ENCODE measurements at regions of chr17 and their contacts with region 1.

Region 1: DNA sequence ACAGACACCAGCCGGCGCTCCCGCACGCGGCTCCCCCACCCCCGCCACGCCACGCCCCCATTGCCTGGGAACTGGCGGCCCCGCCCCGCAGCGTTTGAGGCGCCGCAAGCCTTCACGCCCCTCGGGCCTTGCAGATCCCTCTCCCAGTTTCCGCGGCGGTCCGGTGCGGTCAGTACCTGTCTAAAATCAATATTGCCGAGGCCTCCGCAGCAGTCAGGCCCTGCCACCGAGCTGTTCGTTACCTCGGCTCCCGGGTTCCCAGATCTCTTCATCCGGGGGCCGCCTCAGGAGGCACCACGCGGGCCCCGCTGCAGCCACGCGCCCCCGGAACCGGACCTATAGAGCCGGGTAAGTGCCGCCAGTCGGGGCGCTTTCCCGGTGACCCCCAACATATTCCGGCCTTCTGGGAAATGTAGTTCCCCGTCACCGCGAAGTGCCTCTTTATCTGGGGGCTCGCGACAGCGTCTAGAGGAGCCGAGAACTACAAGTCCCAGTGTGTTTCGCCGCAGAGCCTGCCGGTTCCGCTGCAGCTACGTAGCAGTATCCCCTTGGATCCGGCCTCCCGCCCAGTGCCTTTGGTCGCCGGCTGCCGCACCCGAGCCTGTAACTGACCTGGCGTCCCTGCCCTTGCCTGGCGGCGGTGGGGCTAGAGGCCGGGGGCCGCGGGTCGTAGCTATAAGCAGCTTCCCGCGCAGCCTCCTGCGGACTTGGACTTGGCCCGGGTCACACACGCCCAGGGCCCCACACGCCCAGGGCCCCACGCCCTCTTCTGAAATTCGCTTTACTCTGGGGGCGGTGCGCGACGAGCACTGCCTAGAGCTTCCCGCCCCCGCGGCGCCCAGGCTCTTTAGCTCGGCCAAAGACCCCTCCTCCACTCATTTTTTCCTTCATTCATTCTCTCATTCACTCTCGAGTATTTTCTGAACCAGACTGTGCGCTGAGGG is at the start of gene PEMT:
- DNase-seq: peak; percentile 97
- H3K4me3 Mint-ChIP-seq: peak within 1 kb of the TSS; percentile 93
- H3K27ac Mint-ChIP-seq: peak within 1 kb of the TSS; percentile 88
- H3K4me1 Mint-ChIP-seq: peaks cover 20% of the 10 kb centered on the region
- H3K27me3 Mint-ChIP-seq: no peaks in the 10 kb centered on the region
- total RNA-seq, gene PEMT: 33.7 to 35.6 TPM

Region 2: DNA sequence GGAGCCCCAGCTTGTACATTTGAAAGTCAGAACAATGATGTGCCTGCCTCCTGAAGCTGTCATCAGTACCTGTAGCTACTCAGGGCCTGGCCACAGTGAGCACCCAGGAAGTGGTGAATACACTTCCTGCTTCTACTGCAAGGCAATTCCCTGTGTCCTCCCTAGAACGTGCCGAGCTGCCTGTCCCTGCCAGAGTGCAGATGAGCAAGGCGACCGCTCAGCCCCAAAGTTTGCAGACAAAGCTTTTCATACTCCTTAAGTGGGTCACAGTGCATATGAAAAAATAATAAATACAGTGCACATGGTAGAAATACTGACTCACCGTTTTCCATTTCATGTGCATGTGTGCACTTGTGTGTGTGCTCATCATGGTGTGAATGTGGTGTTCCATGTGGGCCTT is 472.1 kb before region 1 on chr17:
- CTCF ChIA-PET with region 1: no interaction called
- intact Hi-C with region 1: loop called (anchors 2 kb)
- DNase-seq: peak; percentile 79
- H3K4me3 Mint-ChIP-seq: no peak overlapping the region
- H3K27ac Mint-ChIP-seq: peak overlapping the region; percentile 82
- H3K4me1 Mint-ChIP-seq: peaks cover 75% of the 10 kb centered on the region
- H3K27me3 Mint-ChIP-seq: no peaks in the 10 kb centered on the region

Region 3: GRCh38 chr17:17496189-17497064 is 95.2 kb before region 1 on chr17 and contains the start of gene RASD1:
- CTCF ChIA-PET with region 1: interaction called, 12 read pairs
- intact Hi-C with region 1: loop called (anchors 2 kb)
- DNase-seq: peak; percentile 81
- H3K4me3 Mint-ChIP-seq: peak within 1 kb of the TSS; percentile 64
- H3K27ac Mint-ChIP-seq: no peak within 1 kb of the TSS
- H3K4me1 Mint-ChIP-seq: peaks cover 12% of the 10 kb centered on the region
- H3K27me3 Mint-ChIP-seq: peaks cover 12% of the 10 kb centered on the region
- total RNA-seq, gene RASD1: 0.17 to 0.36 TPM

Region 4: GRCh38 chr17:17928398-17929287 is 337.0 kb after region 1 on chr17:
- CTCF ChIA-PET with region 1: no interaction called
- intact Hi-C with region 1: no loop called
- DNase-seq: no peak
- H3K4me3 Mint-ChIP-seq: no peak overlapping the region
- H3K27ac Mint-ChIP-seq: no peak overlapping the region
- H3K4me1 Mint-ChIP-seq: peaks cover 7% of the 10 kb centered on the region
- H3K27me3 Mint-ChIP-seq: no peaks in the 10 kb centered on the region

Region 5: GRCh38 chr17:17972126-17972951 is 380.7 kb after region 1 on chr17 and contains the starts of genes DRC3 and TOM1L2:
- CTCF ChIA-PET with region 1: no interaction called
- intact Hi-C with region 1: loop called (anchors 5 kb)
- DNase-seq: peak; percentile 100
- H3K4me3 Mint-ChIP-seq: peak within 1 kb of the TSS; percentile 90
- H3K27ac Mint-ChIP-seq: peak within 1 kb of the TSS; percentile 75
- H3K4me1 Mint-ChIP-seq: peaks cover 35% of the 10 kb centered on the region
- H3K27me3 Mint-ChIP-seq: no peaks in the 10 kb centered on the region
- total RNA-seq, gene DRC3: 0.40 to 0.64 TPM
- total RNA-seq, gene TOM1L2: 9.8 to 9.9 TPM

Region 6: GRCh38 chr17:18087610-18088491 is 496.2 kb after region 1 on chr17 and contains the start of gene DRG2:
- CTCF ChIA-PET with region 1: no interaction called
- intact Hi-C with region 1: loop called (anchors 1 kb)
- DNase-seq: peak; percentile 92
- H3K4me3 Mint-ChIP-seq: peak within 1 kb of the TSS; percentile 97
- H3K27ac Mint-ChIP-seq: peak within 1 kb of the TSS; percentile 93
- H3K4me1 Mint-ChIP-seq: peaks cover 29% of the 10 kb centered on the region
- H3K27me3 Mint-ChIP-seq: no peaks in the 10 kb centered on the region
- total RNA-seq, gene DRG2: 38.4 to 38.7 TPM